ENCODE measurements at regions of chr15 and their contacts with region 1.

Region 1: GRCh38 chr15:61834076-61834697 is 226.1 kb downstream of the VPS13C start:
- DNase-seq: peak; percentile 91
- H3K4me3 ChIP-seq: no peak overlapping the region
- H3K27ac ChIP-seq: no peak overlapping the region
- H3K4me1 ChIP-seq: peaks cover 0 to 24% (median 7%) of the 10 kb centered on the region in 6 donors
- H3K27me3 ChIP-seq: peaks cover 0 to 25% (median 6%) of the 10 kb centered on the region in 7 donors
- CTCF ChIP-seq: peak; percentile 76 to 98 (median 94)
- POLR2A ChIP-seq: no peak

Region 2: DNA sequence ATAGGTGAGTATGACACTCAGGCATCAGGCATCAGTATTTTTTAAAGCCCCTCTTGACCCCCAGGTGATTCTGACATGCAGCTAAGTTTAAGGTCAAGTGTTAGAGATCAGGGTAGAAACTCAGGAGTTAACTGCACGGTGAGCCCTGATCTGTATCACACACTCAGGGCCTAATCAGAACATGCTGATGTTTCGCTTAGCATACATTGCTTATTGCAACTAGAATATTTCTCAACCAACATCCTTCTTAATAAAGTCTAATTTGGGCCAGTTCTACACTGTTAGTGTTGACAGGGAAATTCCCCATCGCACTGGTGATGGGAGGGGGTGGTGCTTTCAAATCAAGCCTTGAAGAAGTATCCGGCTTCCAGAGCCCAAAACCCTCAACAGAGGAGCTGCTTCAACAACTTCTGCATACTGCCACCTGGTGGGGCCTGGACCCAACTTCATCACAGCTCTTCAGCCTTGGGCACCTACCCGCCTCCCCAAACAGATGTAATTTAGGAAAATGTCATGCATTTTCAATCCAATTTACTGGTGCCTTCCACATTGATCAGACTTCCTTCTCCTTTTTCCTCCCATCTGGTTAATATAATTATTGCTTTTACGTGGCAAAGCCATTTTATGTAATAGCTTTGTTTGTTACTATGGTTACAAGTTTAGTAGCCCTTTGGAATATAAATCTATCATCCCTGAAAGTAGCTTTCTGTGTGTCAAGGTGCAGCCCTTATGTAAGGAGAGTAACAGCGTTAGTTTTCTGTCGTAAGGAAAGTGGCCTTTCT is 917.3 kb before region 1 on chr15:
- intact Hi-C with region 1: loop called (anchors 10 kb)
- DNase-seq: peak; percentile 90
- H3K4me3 ChIP-seq: peak overlapping the region in 1 of 8 donors; percentile 16
- H3K27ac ChIP-seq: peak overlapping the region in 5 of 8 donors; percentile 15 to 50 (median 34)
- H3K4me1 ChIP-seq: peaks cover 0 to 23% (median 11%) of the 10 kb centered on the region in 6 donors
- H3K27me3 ChIP-seq: no peaks in the 10 kb centered on the region
- CTCF ChIP-seq: peak; percentile 70 to 94 (median 84)
- POLR2A ChIP-seq: no peak